ENCODE measurements at regions of chr12 and their contacts with region 1.

Region 1: DNA sequence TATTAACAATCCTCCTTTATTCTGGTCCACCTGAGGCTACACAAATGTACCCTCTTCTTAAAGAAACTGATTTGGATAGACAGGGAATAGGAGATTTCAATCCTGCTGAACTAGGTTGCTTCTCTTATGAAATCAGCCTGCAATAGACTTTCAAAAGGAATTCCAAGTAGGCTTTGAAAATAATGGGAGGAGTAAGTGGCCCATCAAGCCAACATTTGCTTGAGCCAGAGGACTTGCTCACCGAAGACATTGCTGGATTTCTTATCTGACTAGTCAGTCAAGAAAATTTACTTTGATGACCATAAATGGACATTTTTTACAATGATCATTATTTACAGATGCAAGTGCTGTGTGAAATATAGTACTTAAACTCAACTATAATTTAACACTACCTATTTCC is 82.8 kb upstream of the RASSF8 start:
- DNase-seq: no peak
- H3K4me3 ChIP-seq: no peak overlapping the region
- H3K27ac ChIP-seq: no peak overlapping the region
- H3K4me1 ChIP-seq: no peaks in the 10 kb centered on the region
- CTCF ChIP-seq: no peak

Region 2: GRCh38 chr12:25793196-25793595 is 82.5 kb before region 1 on chr12:
- CTCF ChIA-PET with region 1: no interaction called
- POLR2A ChIA-PET with region 1: no interaction called
- intact Hi-C with region 1: no loop called
- DNase-seq: no peak
- H3K4me3 ChIP-seq: no peak overlapping the region
- H3K27ac ChIP-seq: no peak overlapping the region
- H3K4me1 ChIP-seq: no peaks in the 10 kb centered on the region
- CTCF ChIP-seq: no peak

Region 3: GRCh38 chr12:26580619-26581018 is 705.0 kb after region 1 on chr12:
- CTCF ChIA-PET with region 1: no interaction called
- POLR2A ChIA-PET with region 1: no interaction called
- intact Hi-C with region 1: loop called (anchors 10 kb)
- DNase-seq: no peak
- H3K4me3 ChIP-seq: no peak overlapping the region
- H3K27ac ChIP-seq: no peak overlapping the region
- H3K4me1 ChIP-seq: no peaks in the 10 kb centered on the region
- CTCF ChIP-seq: no peak

Measured in OCI-LY7 (cell line).